ENCODE measurements at regions of chr5 and their contacts with region 1.

Region 1: GRCh38 chr5:127757576-127757975 is 54.4 kb downstream of the CCDC192 start:
- DNase-seq: no peak
- ATAC-seq: no peak

Region 2: GRCh38 chr5:127705120-127705892 is 52.3 kb before region 1 on chr5:
- intact Hi-C with region 1: no loop called
- DNase-seq: no peak
- ATAC-seq: peak; percentile 47

Region 3: GRCh38 chr5:128201065-128201926 is 443.7 kb after region 1 on chr5:
- intact Hi-C with region 1: loop called (anchors 2 kb)
- DNase-seq: peak; percentile 90
- ATAC-seq: peak; percentile 71

Measured in Right ventricle myocardium inferior (tissue), 1 donor.